ENCODE measurements at regions of chr6 and their contacts with region 1.

Region 1: DNA sequence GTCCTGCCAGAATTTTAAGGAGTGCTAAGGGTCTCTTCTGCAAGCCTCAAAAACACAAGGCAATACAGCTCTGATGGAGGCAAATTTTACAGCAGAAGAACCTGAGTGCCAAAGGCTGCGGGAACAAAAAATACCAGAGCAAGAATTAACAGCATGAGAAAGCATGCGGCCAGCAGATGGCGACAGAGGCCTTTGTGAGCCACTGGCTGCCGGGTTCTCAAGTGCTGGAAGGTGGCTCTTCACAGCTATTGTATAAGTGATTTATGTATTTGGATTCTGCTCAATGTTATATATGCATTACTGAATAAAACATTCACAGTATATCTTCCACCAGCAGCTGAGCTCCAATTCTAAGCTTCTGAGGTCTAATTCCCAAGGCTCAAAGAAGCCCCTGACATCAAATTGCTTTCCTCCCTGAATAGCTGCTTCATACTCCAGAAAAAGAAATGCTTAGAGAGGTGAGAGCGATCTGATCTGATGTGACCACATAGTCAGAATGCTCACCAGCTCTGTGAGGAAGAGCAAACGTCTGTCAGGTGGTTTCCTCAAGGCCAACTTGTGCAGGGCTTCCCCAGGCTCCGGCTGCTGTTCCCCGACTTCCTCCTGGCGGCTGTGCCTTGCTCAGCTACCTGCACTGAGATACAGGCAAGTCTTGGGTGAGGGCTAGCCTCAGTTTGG is 58.6 kb downstream of the PPP1R3G start:
- DNase-seq: peak; percentile 44 to 70
- ATAC-seq: peak; percentile 86 to 90
- H3K4me3 ChIP-seq: no peak overlapping the region
- H3K27ac ChIP-seq: no peak overlapping the region
- H3K4me1 ChIP-seq: no peaks in the 10 kb centered on the region
- CTCF ChIP-seq: peak; percentile 82
- EP300 ChIP-seq: no peak
- POLR2A ChIP-seq: no peak
- RAD21 ChIP-seq: peak; percentile 90 to 91

Region 2: DNA sequence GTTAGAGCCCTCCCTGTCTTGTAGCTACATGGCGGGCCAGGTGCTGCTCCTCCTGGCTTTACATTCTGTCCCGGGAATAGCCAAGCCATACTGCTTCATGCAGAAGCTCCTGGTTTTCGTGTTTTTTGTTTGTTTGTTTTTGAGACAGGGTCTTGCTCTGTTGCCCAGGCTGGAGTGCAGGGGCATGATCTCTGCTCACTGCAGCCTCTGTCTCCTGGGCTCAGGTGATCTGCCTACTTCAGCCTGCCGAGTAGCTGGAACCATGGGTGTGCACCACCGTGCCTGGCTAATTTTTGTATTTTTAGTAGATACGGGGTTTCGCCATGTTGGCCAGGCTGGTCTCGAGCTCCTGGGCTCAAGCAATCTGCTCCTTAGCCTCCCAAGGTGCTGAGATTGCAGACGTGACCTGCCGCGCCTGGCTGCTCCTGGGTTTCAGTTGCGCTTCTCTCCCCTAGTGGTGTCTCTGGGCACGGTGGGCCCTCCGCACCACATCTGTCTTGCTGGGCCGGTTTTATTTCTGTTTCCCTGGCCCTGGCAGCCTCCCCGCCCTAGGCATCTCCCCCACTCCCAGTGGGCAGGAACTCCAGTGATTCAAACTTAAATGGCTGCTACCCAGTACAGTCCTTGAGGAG is 354.7 kb before region 1 on chr6:
- CTCF ChIA-PET with region 1: no interaction called
- POLR2A ChIA-PET with region 1: no interaction called
- DNase-seq: no peak
- ATAC-seq: no peak; a peak in 1 of 6 replicates
- H3K4me3 ChIP-seq: no peak overlapping the region
- H3K27ac ChIP-seq: no peak overlapping the region
- H3K4me1 ChIP-seq: peaks cover 14% of the 10 kb centered on the region
- CTCF ChIP-seq: no peak
- EP300 ChIP-seq: no peak
- POLR2A ChIP-seq: no peak
- RAD21 ChIP-seq: no peak

Region 3: GRCh38 chr6:5174244-5174643 is 30.5 kb after region 1 on chr6:
- CTCF ChIA-PET with region 1: interaction called, 18 read pairs
- POLR2A ChIA-PET with region 1: no interaction called
- DNase-seq: no peak
- ATAC-seq: no peak
- H3K4me3 ChIP-seq: no peak overlapping the region
- H3K27ac ChIP-seq: no peak overlapping the region
- H3K4me1 ChIP-seq: no peaks in the 10 kb centered on the region
- CTCF ChIP-seq: no peak
- EP300 ChIP-seq: no peak
- POLR2A ChIP-seq: no peak
- RAD21 ChIP-seq: no peak

Region 4: GRCh38 chr6:5302995-5303622 is 159.3 kb after region 1 on chr6:
- CTCF ChIA-PET with region 1: interaction called, 10 read pairs
- POLR2A ChIA-PET with region 1: no interaction called
- DNase-seq: peak; percentile 33 to 52
- ATAC-seq: peak; percentile 92 to 98
- H3K4me3 ChIP-seq: no peak overlapping the region
- H3K27ac ChIP-seq: no peak overlapping the region
- H3K4me1 ChIP-seq: peaks cover 7% of the 10 kb centered on the region; the same call in 2 of the 3 replicates
- CTCF ChIP-seq: peak; percentile 21; the same call in 1 of the 3 replicates
- EP300 ChIP-seq: no peak
- POLR2A ChIP-seq: no peak
- RAD21 ChIP-seq: peak; percentile 29 to 32; a peak in 1 of 5 replicates

Region 5: GRCh38 chr6:5379647-5380242 is 236.0 kb after region 1 on chr6:
- CTCF ChIA-PET with region 1: interaction called, 17 read pairs
- POLR2A ChIA-PET with region 1: no interaction called
- DNase-seq: peak; percentile 9 to 42
- ATAC-seq: peak; percentile 56 to 67; a peak in 3 of 6 replicates
- H3K4me3 ChIP-seq: no peak overlapping the region
- H3K27ac ChIP-seq: no peak overlapping the region
- H3K4me1 ChIP-seq: no peaks in the 10 kb centered on the region
- CTCF ChIP-seq: peak; percentile 46
- EP300 ChIP-seq: no peak
- POLR2A ChIP-seq: no peak
- RAD21 ChIP-seq: peak; percentile 44 to 66; a peak in 2 of 5 replicates

Region 6: GRCh38 chr6:6547110-6547879 is 1403.5 kb after region 1 on chr6:
- CTCF ChIA-PET with region 1: interaction called, 11 read pairs
- POLR2A ChIA-PET with region 1: interaction called, 3 read pairs
- DNase-seq: peak; percentile 58 to 67
- ATAC-seq: peak; percentile 97 to 99
- H3K4me3 ChIP-seq: peak overlapping the region; percentile 30; the same call in 2 of the 3 replicates
- H3K27ac ChIP-seq: no peak overlapping the region
- H3K4me1 ChIP-seq: no peaks in the 10 kb centered on the region
- CTCF ChIP-seq: peak; percentile 73
- EP300 ChIP-seq: no peak
- POLR2A ChIP-seq: no peak
- RAD21 ChIP-seq: peak; percentile 78